Mammary epithelial cell (primary cell): ENCODE measurements at regions of chr1 and their contacts with region 1.

Region 1: DNA sequence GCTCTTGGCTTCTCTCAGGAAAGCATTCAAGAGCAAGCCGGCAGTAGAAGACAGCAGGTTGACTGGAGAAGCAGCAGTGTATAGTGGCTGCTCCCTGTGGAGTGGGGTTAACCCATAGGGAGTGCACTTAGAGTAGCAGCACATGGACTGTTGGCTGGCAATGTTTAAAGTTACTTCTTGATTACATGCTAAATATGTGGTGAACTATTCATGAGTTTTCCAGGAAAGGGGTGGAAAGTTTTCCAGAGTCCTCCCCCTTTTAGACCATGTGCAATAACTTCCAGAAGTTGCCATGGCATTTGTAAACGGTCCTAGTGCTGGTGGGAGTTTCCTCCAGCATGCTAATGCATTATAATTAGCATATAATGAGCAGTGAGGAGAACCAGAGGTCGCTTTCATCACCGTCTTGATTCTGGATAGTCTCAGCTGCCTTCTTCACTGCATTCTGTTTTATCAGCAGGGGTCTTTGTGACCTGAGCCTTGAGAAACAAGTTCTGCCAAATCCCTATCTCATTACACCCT is 131.8 kb downstream of the CCDC185 start:
- DNase-seq: no peak
- H3K4me3 ChIP-seq: no peak overlapping the region
- H3K27ac ChIP-seq: no peak overlapping the region
- H3K4me1 ChIP-seq: no peaks in the 10 kb centered on the region
- H3K27me3 ChIP-seq: no peaks in the 10 kb centered on the region
- CTCF ChIP-seq: no peak

Region 2: GRCh38 chr1:223423641-223424233 is 101.3 kb before region 1 on chr1:
- CTCF ChIA-PET with region 1: no interaction called
- dilution Hi-C with region 1: no loop called
- in situ Hi-C with region 1: no loop called
- intact Hi-C with region 1: no loop called
- DNase-seq: peak; percentile 21
- H3K4me3 ChIP-seq: no peak overlapping the region
- H3K27ac ChIP-seq: no peak overlapping the region
- H3K4me1 ChIP-seq: peaks cover 21% of the 10 kb centered on the region
- H3K27me3 ChIP-seq: no peaks in the 10 kb centered on the region
- CTCF ChIP-seq: no peak

Region 3: GRCh38 chr1:223444437-223444836 is 80.6 kb before region 1 on chr1:
- CTCF ChIA-PET with region 1: no interaction called
- dilution Hi-C with region 1: loop called (anchors 5 kb)
- in situ Hi-C with region 1: no loop called
- intact Hi-C with region 1: no loop called
- DNase-seq: no peak
- H3K4me3 ChIP-seq: no peak overlapping the region
- H3K27ac ChIP-seq: no peak overlapping the region
- H3K4me1 ChIP-seq: no peaks in the 10 kb centered on the region
- H3K27me3 ChIP-seq: no peaks in the 10 kb centered on the region
- CTCF ChIP-seq: no peak